Activated CD4-positive, alpha-beta memory T cell treated with anti-CD3 and anti-CD28 coated beads, Interleukin-2, amount 10 ng/mL, durations not matched to agents 7 days and 5 days (primary cell): ENCODE measurements at regions of chr2 and their contacts with region 1.

Region 1: GRCh38 chr2:24360050-24360962 is at the start of gene ITSN2:
- DNase-seq: peak; percentile 85
- H3K4me3 Mint-ChIP-seq: peak within 1 kb of the TSS; percentile 83
- H3K27ac Mint-ChIP-seq: peak within 1 kb of the TSS; percentile 85
- H3K4me1 Mint-ChIP-seq: peaks cover 25% of the 10 kb centered on the region
- H3K27me3 Mint-ChIP-seq: peaks cover 4% of the 10 kb centered on the region
- total RNA-seq, gene ITSN2: 75.6 to 75.7 TPM

Region 2: DNA sequence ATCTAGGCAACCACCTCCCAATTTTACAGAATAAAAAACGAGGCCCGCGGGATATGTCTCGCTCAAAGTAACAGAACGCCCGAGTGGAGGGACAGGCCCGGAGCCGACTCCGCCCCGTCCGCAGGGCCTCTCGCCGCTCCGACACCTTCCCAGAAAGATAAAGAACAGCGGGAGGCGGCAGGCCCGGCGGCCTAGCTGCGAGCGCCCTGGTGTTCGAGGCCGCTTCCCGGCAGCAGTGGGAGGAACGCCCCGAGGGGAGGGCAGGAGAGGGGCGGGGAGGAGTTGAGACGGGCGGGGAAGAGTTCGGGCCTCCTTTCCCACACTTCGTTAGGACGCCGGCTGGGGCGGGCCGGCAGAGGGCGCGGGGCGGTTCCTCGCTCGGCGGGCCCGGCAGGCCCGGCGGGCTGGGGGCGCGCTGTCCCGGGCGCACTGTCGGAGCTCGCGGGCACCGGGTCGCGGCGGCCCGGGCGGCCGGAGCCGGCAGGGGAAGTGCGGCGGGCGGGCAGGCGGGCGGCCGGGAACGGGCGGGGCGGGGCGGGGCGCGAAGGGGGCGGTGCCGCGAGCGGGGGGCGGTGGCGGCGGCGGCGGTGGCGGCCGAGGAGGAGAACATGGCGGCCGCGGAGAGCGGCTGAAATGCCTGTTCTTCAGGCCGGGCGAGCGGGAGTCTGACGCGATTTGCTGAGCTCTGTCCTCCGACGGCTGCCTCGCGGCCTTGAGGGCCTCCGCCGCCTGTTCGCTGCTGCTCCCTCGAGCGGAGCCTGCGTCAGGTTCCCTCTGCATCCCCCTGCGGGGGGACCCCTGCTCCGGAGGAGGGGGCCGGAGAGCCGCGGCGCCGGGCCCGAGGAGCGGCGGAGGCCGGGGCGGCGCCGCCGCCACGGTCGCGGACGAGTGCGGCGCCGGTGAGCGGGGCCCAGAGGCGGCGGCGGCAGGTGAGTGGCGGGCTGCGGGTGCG is 130.6 kb after region 1 on chr2 and contains the start of gene NCOA1:
- CTCF ChIA-PET with region 1: no interaction called
- POLR2A ChIA-PET with region 1: interaction called, 10 read pairs
- DNase-seq: peak; percentile 91
- H3K4me3 Mint-ChIP-seq: peak within 1 kb of the TSS; percentile 80
- H3K27ac Mint-ChIP-seq: peak within 1 kb of the TSS; percentile 75
- H3K4me1 Mint-ChIP-seq: peaks cover 40% of the 10 kb centered on the region
- H3K27me3 Mint-ChIP-seq: peaks cover 5% of the 10 kb centered on the region
- total RNA-seq, gene NCOA1: 15.8 to 16.6 TPM

Region 3: GRCh38 chr2:24792874-24793760 is 432.8 kb after region 1 on chr2 and contains the starts of genes CENPO and PTRHD1:
- CTCF ChIA-PET with region 1: interaction called, 3 read pairs
- POLR2A ChIA-PET with region 1: interaction called, 19 read pairs
- DNase-seq: peak; percentile 96
- H3K4me3 Mint-ChIP-seq: peak within 1 kb of the TSS; percentile 96
- H3K27ac Mint-ChIP-seq: peak within 1 kb of the TSS; percentile 98
- H3K4me1 Mint-ChIP-seq: peaks cover 53% of the 10 kb centered on the region
- H3K27me3 Mint-ChIP-seq: no peaks in the 10 kb centered on the region
- total RNA-seq, gene CENPO: 40.3 to 42.9 TPM
- total RNA-seq, gene PTRHD1: 25.4 to 25.5 TPM